ENCODE measurements at regions of chr6 and their contacts with region 1.

Region 1: DNA sequence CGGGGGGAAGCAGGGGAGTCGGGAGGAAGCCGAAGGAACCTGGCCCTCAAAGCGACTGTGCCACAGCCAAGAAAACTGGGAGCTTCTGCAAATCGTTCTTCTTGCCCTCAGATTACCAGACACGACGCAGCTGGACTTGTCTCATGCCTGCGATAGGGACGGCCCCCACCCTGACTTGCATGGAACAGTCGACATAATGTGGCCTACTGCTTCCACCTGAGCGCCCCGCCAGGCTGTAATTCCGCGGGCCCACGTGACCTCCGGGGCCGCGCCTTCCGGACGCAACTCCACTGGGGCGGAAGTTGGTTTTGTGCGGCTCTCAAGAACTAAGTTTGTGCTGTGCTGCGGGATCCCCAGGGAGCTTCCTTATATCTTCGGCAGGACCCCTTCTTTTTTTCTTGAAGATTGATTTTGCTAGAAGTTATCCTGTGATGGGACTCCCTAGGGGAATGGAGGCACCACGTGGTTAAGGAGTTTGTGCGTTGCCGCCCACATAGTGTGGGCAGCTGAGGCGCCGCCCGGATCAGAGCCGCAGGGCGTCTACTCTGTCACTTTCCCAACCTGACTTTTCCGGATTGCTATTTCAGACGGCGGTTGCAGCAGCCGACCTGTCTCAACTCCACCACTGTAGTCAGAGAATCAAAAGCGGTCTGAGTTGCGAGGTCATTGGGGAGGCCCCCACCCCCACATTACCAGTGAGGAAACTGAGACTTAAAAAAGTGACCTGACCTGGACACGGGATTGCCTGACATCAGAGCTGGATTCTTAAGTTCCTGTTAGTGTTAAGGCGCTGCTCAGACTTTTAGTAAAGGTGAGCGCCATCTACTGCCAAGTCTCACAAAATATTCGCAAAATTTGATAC is 540 bp upstream of the CD164 start:
- DNase-seq: peak; percentile 94
- H3K4me3 Mint-ChIP-seq: peak overlapping the region; percentile 96
- H3K27ac Mint-ChIP-seq: peak overlapping the region; percentile 100
- H3K4me1 Mint-ChIP-seq: peaks cover 35% of the 10 kb centered on the region
- H3K27me3 Mint-ChIP-seq: no peaks in the 10 kb centered on the region

Region 2: DNA sequence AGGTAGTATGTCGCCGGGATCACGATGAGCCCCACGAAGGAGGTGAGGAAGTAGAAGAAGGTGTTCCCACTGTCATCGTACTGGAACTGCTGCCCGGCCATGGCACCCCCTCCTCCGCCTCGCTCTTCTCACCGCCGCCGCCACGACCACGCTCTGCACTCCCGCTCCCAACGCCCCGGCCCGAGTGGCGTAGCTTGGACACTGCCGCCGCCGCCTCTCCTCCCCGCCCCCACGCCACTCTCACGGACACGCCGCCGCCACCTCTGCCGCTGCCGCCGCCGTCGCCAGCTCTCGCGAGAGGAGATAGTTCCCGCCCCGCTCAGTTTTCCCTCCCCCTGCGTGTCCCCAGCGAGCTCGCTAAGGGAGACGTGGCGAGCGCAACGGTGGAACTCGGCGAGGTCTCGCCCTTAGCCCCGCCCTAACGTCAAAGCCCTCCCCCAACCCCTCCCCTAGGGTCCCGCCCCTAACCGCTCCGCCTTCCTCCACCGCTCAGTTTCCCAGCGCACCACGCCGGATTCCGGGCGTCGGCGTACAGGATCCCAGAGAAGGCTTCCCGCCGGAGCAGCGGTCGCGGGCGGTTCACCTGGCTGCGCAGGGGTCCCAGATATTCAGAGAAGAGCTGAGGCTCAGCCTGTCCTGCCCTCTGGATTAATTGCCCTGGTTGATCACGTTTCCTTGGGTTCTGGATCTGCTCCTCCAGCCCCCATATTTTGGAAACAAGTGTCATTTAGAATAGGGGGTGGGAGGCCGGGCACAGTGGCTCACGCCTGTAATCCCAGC is 1424.7 kb before region 1 on chr6 and contains the start of gene SEC63:
- CTCF ChIA-PET with region 1: no interaction called
- intact Hi-C with region 1: loop called (anchors 5 kb)
- DNase-seq: peak; percentile 98
- H3K4me3 Mint-ChIP-seq: peak within 1 kb of the TSS; percentile 97
- H3K27ac Mint-ChIP-seq: peak within 1 kb of the TSS; percentile 94
- H3K4me1 Mint-ChIP-seq: peaks cover 32% of the 10 kb centered on the region
- H3K27me3 Mint-ChIP-seq: no peaks in the 10 kb centered on the region
- total RNA-seq, gene SEC63: 78.3 to 86.5 TPM

Region 3: DNA sequence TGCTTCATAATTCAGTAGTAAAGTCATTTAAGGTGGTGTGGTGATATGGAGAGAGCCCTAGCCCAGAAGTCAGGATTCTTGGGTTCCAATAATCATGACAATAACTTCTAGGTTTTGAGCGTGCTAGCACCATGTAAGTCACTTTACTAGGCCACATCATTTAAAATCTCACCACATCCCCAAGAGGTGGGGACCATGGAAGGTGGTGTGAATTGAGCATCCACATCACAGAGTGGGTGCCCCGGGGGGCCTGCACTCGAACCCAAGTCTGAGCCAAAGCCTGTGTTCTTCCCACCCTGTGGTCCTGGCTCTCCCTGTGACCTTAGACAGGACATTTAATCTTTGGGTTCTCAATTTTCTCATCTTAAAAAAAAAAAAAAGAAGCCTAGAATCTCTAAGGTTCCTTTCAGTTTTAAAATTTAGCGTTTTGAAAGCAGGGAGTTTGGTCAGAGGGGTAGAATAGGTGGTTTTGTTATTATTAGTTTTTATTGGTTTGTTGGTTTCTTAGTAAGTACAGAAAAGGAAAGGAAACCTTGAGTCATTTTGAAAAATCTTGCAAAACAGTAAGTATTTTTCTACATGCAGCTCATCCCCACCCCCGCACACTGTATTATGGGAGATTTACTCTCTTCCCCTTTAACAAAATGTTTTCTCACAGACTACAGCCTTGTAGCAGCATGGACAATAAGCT is 508.2 kb before region 1 on chr6:
- CTCF ChIA-PET with region 1: no interaction called
- intact Hi-C with region 1: loop called (anchors 2 kb)
- DNase-seq: peak; percentile 80
- H3K4me3 Mint-ChIP-seq: peak overlapping the region; percentile 20
- H3K27ac Mint-ChIP-seq: no peak overlapping the region
- H3K4me1 Mint-ChIP-seq: peaks cover 22% of the 10 kb centered on the region
- H3K27me3 Mint-ChIP-seq: peaks cover 2% of the 10 kb centered on the region

Region 4: DNA sequence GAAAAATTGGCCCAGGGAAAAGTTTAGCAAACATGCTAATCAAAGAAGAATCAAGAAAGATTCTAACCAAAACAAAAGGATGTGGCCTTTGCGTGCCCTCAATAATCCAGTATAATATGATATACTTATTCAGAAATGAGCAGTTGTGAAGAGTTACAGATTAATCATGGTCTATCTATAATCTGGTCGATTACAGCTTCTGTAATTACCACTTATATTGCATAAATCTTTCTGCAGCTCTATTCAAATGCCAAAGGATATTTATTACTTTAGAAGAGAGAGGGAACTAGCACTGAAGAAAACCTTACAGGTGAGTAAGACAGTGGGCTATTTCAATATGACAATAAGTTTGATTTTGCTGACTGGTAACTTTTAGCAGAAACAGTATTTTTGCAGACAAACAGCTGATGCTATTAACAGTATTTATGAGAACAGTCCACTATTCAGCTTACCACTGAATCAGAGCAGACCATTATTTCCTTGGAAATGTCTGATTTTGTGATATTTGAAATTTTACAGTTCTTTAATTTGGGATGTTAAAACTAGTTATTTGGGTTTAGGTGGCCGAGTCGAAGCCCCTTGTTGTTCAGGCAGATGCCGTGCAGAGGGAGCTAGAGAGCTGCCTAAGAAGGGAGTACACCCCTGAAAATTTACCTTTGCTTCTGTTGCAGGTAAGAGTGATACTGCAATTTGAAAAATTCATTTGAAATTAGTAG is 195.2 kb before region 1 on chr6:
- CTCF ChIA-PET with region 1: interaction called, 86 read pairs
- intact Hi-C with region 1: loop called (anchors 1 kb)
- DNase-seq: peak; percentile 70
- H3K4me3 Mint-ChIP-seq: no peak overlapping the region
- H3K27ac Mint-ChIP-seq: no peak overlapping the region
- H3K4me1 Mint-ChIP-seq: no peaks in the 10 kb centered on the region
- H3K27me3 Mint-ChIP-seq: peaks cover 11% of the 10 kb centered on the region

Region 5: GRCh38 chr6:109296452-109296851 is 86.4 kb before region 1 on chr6:
- CTCF ChIA-PET with region 1: no interaction called
- intact Hi-C with region 1: no loop called
- DNase-seq: no peak
- H3K4me3 Mint-ChIP-seq: no peak overlapping the region
- H3K27ac Mint-ChIP-seq: no peak overlapping the region
- H3K4me1 Mint-ChIP-seq: no peaks in the 10 kb centered on the region
- H3K27me3 Mint-ChIP-seq: no peaks in the 10 kb centered on the region

Region 6: GRCh38 chr6:109440331-109441068 is 57.7 kb after region 1 on chr6 and contains the starts of genes PPIL6 and SMPD2:
- CTCF ChIA-PET with region 1: interaction called, 13 read pairs
- intact Hi-C with region 1: loop called (anchors 1 kb)
- DNase-seq: peak; percentile 76
- H3K4me3 Mint-ChIP-seq: peak within 1 kb of the TSS; percentile 94
- H3K27ac Mint-ChIP-seq: peak within 1 kb of the TSS; percentile 87
- H3K4me1 Mint-ChIP-seq: peaks cover 27% of the 10 kb centered on the region
- H3K27me3 Mint-ChIP-seq: no peaks in the 10 kb centered on the region
- total RNA-seq, gene PPIL6: 0.19 TPM in 1 of 2 experiments, not detected in the other
- total RNA-seq, gene SMPD2: 9.4 to 9.7 TPM

Region 7: DNA sequence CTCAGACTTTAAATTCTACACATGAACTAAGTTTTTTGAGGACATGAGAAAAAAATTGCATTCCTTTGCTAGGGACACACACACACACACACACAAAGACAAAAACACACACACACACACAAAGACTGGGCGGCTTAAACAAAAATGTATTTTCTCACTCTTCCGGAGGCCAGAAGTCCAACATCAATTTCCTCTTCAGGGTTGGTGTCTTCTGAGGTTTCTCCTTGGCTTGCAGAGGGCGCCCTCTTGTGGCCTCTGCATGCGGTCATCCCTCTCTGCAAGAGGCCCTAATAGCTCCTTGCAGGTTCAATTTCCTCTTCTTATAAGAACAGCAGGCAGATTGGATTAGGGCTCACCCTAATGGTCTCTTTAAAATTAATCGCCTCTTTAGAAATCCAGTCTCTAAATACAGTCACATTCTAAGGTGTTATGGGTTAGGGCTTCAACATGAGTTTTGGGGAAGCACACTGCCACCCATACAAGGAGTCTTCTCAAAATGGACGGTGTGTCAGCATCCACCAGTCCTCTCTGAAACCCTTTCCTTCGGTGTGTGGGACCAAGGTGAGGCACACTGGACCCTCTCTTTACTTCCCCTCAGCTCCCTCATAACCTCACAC is 656.7 kb after region 1 on chr6:
- CTCF ChIA-PET with region 1: interaction called, 3 read pairs
- intact Hi-C with region 1: loop called (anchors 2 kb)
- DNase-seq: peak; percentile 92
- H3K4me3 Mint-ChIP-seq: peak overlapping the region; percentile 84
- H3K27ac Mint-ChIP-seq: peak overlapping the region; percentile 96
- H3K4me1 Mint-ChIP-seq: peaks cover 12% of the 10 kb centered on the region
- H3K27me3 Mint-ChIP-seq: no peaks in the 10 kb centered on the region

Measured in activated naive CD4-positive, alpha-beta T cell treated with anti-CD3 and anti-CD28 coated beads for 36 hours (primary cell).